ENCODE measurements at regions of chr4 and their contacts with region 1.

Region 1: DNA sequence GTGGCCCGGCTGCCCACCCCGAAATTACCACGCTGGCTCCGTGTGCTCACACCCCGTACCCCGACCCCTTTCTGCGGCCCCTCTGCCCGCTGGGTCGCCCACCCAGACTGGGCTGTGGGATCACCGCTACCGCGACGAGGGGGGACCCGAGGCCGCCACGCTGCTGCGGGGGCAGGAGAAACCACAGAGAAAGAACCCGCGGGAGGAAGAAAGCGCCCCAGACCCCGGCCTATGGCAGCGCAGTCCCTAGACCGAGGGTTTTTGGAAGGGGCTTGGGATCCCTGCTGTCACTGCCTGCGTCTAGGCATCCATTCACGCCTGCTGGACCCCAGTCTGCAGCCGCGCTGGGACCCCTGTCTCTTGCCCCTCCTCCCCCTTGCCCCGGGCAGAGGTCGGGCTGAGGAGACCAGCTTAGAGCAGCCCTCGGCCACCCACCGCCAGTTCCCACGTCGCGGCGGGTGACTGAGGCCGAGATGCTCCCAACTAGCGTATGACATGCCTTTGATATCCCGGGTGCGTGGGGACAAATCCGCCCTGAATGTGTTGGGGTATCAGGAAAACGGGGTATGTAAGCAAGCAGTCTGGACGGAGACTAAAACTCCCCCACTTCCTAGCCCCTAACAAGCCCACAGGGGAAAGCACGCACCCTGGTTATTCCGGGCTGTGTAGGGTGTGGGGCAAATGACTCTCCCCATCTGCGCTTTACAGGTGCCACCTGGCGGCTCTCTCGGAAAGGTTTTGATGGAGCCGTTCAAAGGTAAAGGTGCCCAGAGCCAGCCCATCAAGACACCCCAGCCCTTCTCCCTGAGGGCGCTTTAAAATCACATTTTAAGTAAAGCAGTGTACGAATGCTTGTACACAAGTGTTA is 862 bp upstream of the INPP4B start:
- DNase-seq: peak; percentile 33 to 78 (median 70)
- ATAC-seq: peak; percentile 83
- H3K4me3 ChIP-seq: peak overlapping the region; percentile 54 to 87
- H3K4me3 Mint-ChIP-seq: peak overlapping the region; percentile 86
- H3K27ac ChIP-seq: no peak overlapping the region
- H3K27ac Mint-ChIP-seq: no peak overlapping the region
- H3K4me1 ChIP-seq: peaks cover 4% of the 10 kb centered on the region
- H3K4me1 Mint-ChIP-seq: peaks cover 13% of the 10 kb centered on the region
- H3K27me3 ChIP-seq: peaks cover 4 to 12% of the 10 kb centered on the region in 2 experiments
- H3K27me3 Mint-ChIP-seq: peaks cover 36% of the 10 kb centered on the region
- CTCF ChIP-seq: peak; percentile 42

Region 2: DNA sequence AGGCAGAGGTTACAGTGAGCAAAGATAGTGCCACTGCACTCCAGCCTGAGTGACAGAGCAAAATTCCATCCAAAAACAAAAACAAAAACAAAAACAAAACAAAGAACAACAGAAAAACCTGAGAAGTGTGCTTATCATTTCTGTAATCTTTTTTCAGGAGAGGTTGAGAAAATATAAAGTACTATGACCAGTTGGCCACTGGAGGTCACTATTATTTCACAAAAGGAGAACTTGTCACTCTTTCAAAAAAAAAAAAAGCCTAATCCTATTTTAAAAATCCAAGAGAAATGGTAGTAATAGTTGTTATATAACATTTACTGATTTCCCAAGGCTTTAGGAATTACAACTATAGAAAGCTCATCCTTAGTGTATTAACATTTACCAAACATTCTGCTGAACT is 1688.7 kb before region 1 on chr4:
- CTCF ChIA-PET with region 1: no interaction called
- POLR2A ChIA-PET with region 1: no interaction called
- intact Hi-C with region 1: loop called in 1 of 2 experiments (anchors 5 kb)
- DNase-seq: peak in 2 of 9 experiments; percentile 7 to 15
- ATAC-seq: no peak
- H3K4me3 ChIP-seq: no peak overlapping the region
- H3K4me3 Mint-ChIP-seq: no peak overlapping the region
- H3K27ac ChIP-seq: no peak overlapping the region
- H3K27ac Mint-ChIP-seq: no peak overlapping the region
- H3K4me1 ChIP-seq: no peaks in the 10 kb centered on the region
- H3K4me1 Mint-ChIP-seq: no peaks in the 10 kb centered on the region
- H3K27me3 ChIP-seq: no peaks in the 10 kb centered on the region
- H3K27me3 Mint-ChIP-seq: peaks cover 10% of the 10 kb centered on the region
- CTCF ChIP-seq: no peak

Region 3: DNA sequence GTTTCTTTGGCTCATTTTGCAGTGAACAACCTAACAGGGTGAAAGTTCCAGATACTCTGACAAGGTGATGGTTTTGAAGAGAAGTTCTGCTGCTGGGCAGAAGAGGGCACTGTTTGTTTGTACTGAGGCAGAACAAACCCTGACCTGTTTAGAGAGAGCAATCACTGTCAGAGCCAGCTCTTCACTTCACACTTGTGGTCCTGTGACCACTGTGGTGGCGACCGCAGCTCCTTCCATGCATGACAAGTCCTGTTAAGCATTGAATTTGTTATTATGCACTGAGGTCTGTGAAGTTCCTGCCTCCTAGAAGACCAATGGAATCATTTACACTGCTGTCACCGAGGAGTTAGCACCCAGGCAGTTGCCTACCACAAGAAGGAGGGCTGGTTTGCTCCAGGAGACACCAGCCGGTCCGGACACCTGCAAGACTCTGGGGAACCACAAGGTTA is 1539.7 kb before region 1 on chr4:
- CTCF ChIA-PET with region 1: interaction called, 4 read pairs
- POLR2A ChIA-PET with region 1: no interaction called
- intact Hi-C with region 1: loop called (anchors 2 kb)
- DNase-seq: peak; percentile 17 to 82 (median 55)
- ATAC-seq: peak; percentile 90
- H3K4me3 ChIP-seq: no peak overlapping the region
- H3K4me3 Mint-ChIP-seq: no peak overlapping the region
- H3K27ac ChIP-seq: no peak overlapping the region
- H3K27ac Mint-ChIP-seq: no peak overlapping the region
- H3K4me1 ChIP-seq: no peaks in the 10 kb centered on the region
- H3K4me1 Mint-ChIP-seq: no peaks in the 10 kb centered on the region
- H3K27me3 ChIP-seq: no peaks in the 10 kb centered on the region
- H3K27me3 Mint-ChIP-seq: peaks cover 5% of the 10 kb centered on the region
- CTCF ChIP-seq: peak; percentile 71

Region 4: GRCh38 chr4:142282870-142283431 is 564.0 kb before region 1 on chr4:
- CTCF ChIA-PET with region 1: interaction called, 3 read pairs
- POLR2A ChIA-PET with region 1: no interaction called
- intact Hi-C with region 1: loop called in 1 of 2 experiments (anchors 1 kb)
- DNase-seq: peak in 5 of 9 experiments; percentile 12 to 53 (median 34)
- ATAC-seq: peak; percentile 34
- H3K4me3 ChIP-seq: no peak overlapping the region
- H3K4me3 Mint-ChIP-seq: no peak overlapping the region
- H3K27ac ChIP-seq: no peak overlapping the region
- H3K27ac Mint-ChIP-seq: no peak overlapping the region
- H3K4me1 ChIP-seq: peaks cover 7% of the 10 kb centered on the region
- H3K4me1 Mint-ChIP-seq: peaks cover 20% of the 10 kb centered on the region
- H3K27me3 ChIP-seq: no peaks in the 10 kb centered on the region
- H3K27me3 Mint-ChIP-seq: no peaks in the 10 kb centered on the region
- CTCF ChIP-seq: peak; percentile 78

Region 5: DNA sequence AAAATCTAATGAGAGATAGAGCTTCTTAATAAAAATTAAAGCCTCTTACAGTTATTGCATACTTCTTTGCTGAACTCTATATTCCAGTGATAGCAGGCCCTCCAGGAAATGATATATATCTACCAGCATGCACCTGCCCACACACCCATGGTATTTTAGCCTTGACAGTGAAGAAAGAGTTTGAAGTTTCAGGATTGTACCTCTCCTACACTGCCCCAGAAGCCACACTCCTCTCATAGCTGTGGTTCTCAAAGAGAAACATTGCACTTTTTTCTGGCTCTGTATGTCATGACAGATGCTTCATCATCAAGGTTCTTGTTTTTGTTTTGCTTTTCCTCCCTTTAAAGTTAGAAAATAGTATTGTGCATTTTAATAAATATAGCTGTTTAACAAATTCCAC is 34.9 kb before region 1 on chr4:
- CTCF ChIA-PET with region 1: no interaction called
- POLR2A ChIA-PET with region 1: no interaction called
- intact Hi-C with region 1: no loop called
- DNase-seq: no peak
- ATAC-seq: no peak
- H3K4me3 ChIP-seq: no peak overlapping the region
- H3K4me3 Mint-ChIP-seq: no peak overlapping the region
- H3K27ac ChIP-seq: no peak overlapping the region
- H3K27ac Mint-ChIP-seq: no peak overlapping the region
- H3K4me1 ChIP-seq: no peaks in the 10 kb centered on the region
- H3K4me1 Mint-ChIP-seq: peaks cover under 1% of the 10 kb centered on the region
- H3K27me3 ChIP-seq: no peaks in the 10 kb centered on the region
- H3K27me3 Mint-ChIP-seq: no peaks in the 10 kb centered on the region
- CTCF ChIP-seq: no peak

Measured in CD8-positive, alpha-beta T cell (primary cell).